Breast epithelium (tissue), 4 donors: ENCODE measurements at regions of chr11 and their contacts with region 1.

Region 1: GRCh38 chr11:41413843-41414242 is 45.6 kb downstream of the LRRC4C start:
- DNase-seq: no peak
- H3K4me3 ChIP-seq: no peak overlapping the region
- H3K27ac ChIP-seq: no peak overlapping the region
- H3K4me1 ChIP-seq: no peaks in the 10 kb centered on the region
- H3K27me3 ChIP-seq: no peaks in the 10 kb centered on the region
- CTCF ChIP-seq: no peak
- POLR2A ChIP-seq: no peak

Region 2: GRCh38 chr11:42490506-42490905 is 1076.7 kb after region 1 on chr11:
- intact Hi-C with region 1: loop called (anchors 5 kb)
- DNase-seq: no peak
- H3K4me3 ChIP-seq: no peak overlapping the region
- H3K27ac ChIP-seq: no peak overlapping the region
- H3K4me1 ChIP-seq: no peaks in the 10 kb centered on the region
- H3K27me3 ChIP-seq: no peaks in the 10 kb centered on the region
- CTCF ChIP-seq: no peak
- POLR2A ChIP-seq: no peak